Activated CD4-positive, alpha-beta memory T cell treated with anti-CD3 and anti-CD28 coated beads for 36 hours (primary cell): ENCODE measurements at regions of chr17 and their contacts with region 1.

Region 1: GRCh38 chr17:18183334-18184142 is at the start of gene ALKBH5:
- DNase-seq: peak; percentile 98
- H3K4me3 Mint-ChIP-seq: peak within 1 kb of the TSS; percentile 91
- H3K27ac Mint-ChIP-seq: peak within 1 kb of the TSS; percentile 99
- H3K4me1 Mint-ChIP-seq: peaks cover 51% of the 10 kb centered on the region
- H3K27me3 Mint-ChIP-seq: no peaks in the 10 kb centered on the region
- total RNA-seq, gene ALKBH5: 122 to 127 TPM

Region 2: DNA sequence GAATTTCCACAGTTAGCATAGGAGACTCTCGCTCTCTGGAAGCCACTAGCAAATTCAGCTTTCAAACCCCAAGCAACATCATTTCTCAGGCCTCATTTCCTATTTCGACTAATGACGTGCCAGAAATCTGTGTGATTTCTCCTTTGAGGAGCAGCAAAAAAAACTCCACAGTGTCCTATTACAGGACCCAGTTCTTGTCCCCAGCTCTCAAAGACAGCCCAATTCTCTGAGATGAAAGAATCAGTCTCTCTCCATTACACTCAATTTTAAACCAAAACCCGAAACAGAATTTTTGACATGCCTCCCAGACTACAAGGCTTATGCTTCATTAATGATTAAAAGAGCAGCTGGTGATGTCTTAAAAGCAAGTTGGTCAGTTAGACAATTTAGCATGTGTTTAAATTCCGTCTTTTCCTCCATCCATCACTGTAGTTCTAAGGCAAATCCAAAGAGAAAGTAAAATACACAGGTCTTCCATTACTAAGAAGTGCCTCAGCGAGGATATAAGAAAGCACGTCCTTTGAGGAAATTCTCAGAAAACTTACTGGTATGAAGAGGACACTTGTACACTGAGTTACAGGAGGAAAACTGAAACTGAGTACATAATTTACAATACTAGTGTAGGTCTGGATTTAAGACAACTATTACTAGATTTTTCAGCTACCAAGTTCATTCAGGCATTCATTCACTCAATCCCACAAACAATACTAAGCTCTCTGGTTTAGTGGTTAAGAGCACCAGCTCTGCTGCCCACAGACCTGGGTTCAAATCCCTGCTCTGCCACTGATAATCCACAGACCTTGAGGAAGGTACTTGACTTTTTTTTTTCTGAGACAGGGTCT is 223.8 kb before region 1 on chr17:
- CTCF ChIA-PET with region 1: no interaction called
- POLR2A ChIA-PET with region 1: interaction called, 3 read pairs
- intact Hi-C with region 1: loop called (anchors 10 kb)
- DNase-seq: peak; percentile 63
- H3K4me3 Mint-ChIP-seq: peak overlapping the region; percentile 78
- H3K27ac Mint-ChIP-seq: peak overlapping the region; percentile 99
- H3K4me1 Mint-ChIP-seq: peaks cover 53% of the 10 kb centered on the region
- H3K27me3 Mint-ChIP-seq: no peaks in the 10 kb centered on the region

Region 3: GRCh38 chr17:18087610-18088491 is 95.7 kb before region 1 on chr17 and contains the start of gene DRG2:
- CTCF ChIA-PET with region 1: interaction called, 3 read pairs
- POLR2A ChIA-PET with region 1: no interaction called
- intact Hi-C with region 1: loop called (anchors 5 kb)
- DNase-seq: peak; percentile 93
- H3K4me3 Mint-ChIP-seq: peak within 1 kb of the TSS; percentile 99
- H3K27ac Mint-ChIP-seq: peak within 1 kb of the TSS; percentile 94
- H3K4me1 Mint-ChIP-seq: peaks cover 25% of the 10 kb centered on the region
- H3K27me3 Mint-ChIP-seq: no peaks in the 10 kb centered on the region
- total RNA-seq, gene DRG2: 37.7 to 39.3 TPM

Region 4: DNA sequence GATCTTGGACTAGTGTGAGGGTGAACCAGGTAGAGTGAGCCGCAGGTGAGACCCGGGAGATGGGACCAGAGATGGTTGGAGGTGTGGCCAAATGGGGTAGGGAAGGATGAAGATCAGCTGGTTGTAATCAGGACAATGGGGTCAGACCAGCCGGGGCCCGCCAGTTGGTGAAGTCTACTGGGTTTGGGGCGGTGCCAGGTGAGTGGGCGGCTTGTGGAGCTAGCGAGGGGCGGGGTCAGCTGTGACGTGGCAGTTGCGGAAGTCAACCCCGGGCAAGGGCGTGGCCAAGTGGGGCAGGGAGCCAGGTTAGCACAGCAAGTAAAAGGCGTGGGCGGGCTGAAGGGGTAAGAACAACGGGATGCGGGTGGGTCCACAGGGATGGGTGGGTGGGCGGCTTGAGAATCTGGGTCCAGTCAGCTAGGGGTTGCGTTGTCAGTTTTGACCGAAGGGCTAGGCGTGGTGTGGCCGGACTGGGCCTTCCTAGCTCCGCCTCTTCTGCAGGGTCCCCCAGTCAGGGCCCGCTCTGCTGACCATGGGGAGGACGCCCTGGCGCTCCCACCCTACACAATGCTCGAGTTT is 25.4 kb before region 1 on chr17:
- CTCF ChIA-PET with region 1: interaction called, 3 read pairs
- POLR2A ChIA-PET with region 1: interaction called, 7 read pairs
- intact Hi-C with region 1: loop called (anchors 1 kb)
- DNase-seq: peak; percentile 98
- H3K4me3 Mint-ChIP-seq: peak overlapping the region; percentile 59
- H3K27ac Mint-ChIP-seq: peak overlapping the region; percentile 64
- H3K4me1 Mint-ChIP-seq: peaks cover 13% of the 10 kb centered on the region
- H3K27me3 Mint-ChIP-seq: no peaks in the 10 kb centered on the region

Region 5: GRCh38 chr17:18225121-18225566 is 41.6 kb after region 1 on chr17:
- CTCF ChIA-PET with region 1: interaction called, 4 read pairs
- POLR2A ChIA-PET with region 1: interaction called, 3 read pairs
- intact Hi-C with region 1: loop called (anchors 1 kb)
- DNase-seq: peak; percentile 97
- H3K4me3 Mint-ChIP-seq: peak overlapping the region; percentile 61
- H3K27ac Mint-ChIP-seq: peak overlapping the region; percentile 28
- H3K4me1 Mint-ChIP-seq: peaks cover 31% of the 10 kb centered on the region
- H3K27me3 Mint-ChIP-seq: no peaks in the 10 kb centered on the region

Region 6: DNA sequence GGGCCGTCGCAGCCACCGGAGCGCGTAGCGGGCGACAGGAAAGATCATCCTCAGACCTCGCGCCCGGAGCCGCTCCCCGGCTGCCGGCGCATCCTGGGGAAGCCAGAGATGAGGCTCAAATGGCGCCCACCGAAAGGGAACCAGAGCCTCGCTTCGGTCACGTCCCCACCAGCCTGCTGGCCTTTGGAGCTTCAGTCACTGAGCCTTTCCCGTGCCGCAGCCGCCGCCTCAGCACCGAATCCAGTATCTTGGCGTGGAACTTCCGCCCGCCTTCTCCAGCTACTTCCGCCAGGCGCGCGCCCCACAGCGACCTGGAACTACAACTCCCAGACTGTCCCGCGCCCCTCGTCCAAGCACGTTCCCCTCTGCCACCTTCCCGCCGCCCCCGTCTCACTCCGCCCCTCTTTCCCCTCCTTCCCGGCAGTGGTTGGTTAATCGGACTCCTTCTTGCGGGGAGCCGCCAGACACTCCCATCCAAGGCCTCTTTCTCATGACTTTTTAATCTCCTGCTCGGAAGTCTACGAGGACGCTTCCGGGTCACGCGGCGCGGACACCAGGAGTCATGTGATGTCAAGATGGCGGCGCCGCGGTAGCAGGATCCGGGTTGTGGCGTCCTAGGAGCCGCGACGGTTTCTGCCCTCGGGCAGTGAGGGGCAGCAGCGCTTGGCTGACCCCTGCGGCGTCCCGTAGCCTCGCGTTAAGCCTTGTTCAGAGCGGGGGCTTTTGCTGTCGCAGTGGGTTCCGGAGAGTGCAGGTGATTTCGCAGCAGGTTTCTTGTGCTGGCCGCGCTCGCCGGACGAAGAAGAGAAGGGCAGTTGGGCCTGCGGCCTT is 131.4 kb after region 1 on chr17 and contains the starts of genes SMCR8 and TOP3A:
- CTCF ChIA-PET with region 1: no interaction called
- POLR2A ChIA-PET with region 1: no interaction called
- intact Hi-C with region 1: loop called (anchors 1 kb)
- DNase-seq: peak; percentile 99
- H3K4me3 Mint-ChIP-seq: peak within 1 kb of the TSS; percentile 95
- H3K27ac Mint-ChIP-seq: peak within 1 kb of the TSS; percentile 98
- H3K4me1 Mint-ChIP-seq: peaks cover 73% of the 10 kb centered on the region
- H3K27me3 Mint-ChIP-seq: no peaks in the 10 kb centered on the region
- total RNA-seq, gene SMCR8: 11.1 to 11.3 TPM
- total RNA-seq, gene TOP3A: 52.4 to 53.0 TPM

Region 7: DNA sequence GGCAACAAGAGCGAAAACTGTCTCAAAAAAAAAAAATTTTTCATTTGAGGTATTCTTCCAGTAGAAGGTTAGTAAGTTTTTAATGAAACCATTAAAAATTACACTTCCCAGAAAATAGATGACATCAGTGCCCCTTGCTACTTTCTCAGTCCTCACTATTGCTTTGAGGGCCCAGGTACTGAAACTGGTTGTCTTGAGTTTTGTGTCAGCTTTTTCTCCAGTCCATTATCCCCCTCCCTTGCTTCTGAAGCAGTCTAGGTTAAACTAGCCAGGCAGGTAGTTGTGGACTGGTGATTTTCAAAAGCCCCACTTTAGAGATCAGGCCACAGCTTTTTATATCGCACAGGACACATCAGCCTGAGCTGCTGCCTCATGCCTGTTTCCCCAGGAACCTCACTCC is 142.5 kb after region 1 on chr17:
- CTCF ChIA-PET with region 1: no interaction called
- POLR2A ChIA-PET with region 1: no interaction called
- intact Hi-C with region 1: no loop called
- DNase-seq: no peak
- H3K4me3 Mint-ChIP-seq: no peak overlapping the region
- H3K27ac Mint-ChIP-seq: peak overlapping the region; percentile 74
- H3K4me1 Mint-ChIP-seq: peaks cover 17% of the 10 kb centered on the region
- H3K27me3 Mint-ChIP-seq: no peaks in the 10 kb centered on the region